Activated T-helper 2 cell treated with anti-CD3 and anti-CD28 coated beads, Interferon-gamma antibody, Interleukin-2, Interleukin-4, amounts not matched to agents 10 μg/mL and 5 μg/mL and 100 μg/mL, durations not matched to agents 14 hours and 24 hours and 36 hours (primary cell): ENCODE measurements at regions of chr10 and their contacts with region 1.

Region 1: DNA sequence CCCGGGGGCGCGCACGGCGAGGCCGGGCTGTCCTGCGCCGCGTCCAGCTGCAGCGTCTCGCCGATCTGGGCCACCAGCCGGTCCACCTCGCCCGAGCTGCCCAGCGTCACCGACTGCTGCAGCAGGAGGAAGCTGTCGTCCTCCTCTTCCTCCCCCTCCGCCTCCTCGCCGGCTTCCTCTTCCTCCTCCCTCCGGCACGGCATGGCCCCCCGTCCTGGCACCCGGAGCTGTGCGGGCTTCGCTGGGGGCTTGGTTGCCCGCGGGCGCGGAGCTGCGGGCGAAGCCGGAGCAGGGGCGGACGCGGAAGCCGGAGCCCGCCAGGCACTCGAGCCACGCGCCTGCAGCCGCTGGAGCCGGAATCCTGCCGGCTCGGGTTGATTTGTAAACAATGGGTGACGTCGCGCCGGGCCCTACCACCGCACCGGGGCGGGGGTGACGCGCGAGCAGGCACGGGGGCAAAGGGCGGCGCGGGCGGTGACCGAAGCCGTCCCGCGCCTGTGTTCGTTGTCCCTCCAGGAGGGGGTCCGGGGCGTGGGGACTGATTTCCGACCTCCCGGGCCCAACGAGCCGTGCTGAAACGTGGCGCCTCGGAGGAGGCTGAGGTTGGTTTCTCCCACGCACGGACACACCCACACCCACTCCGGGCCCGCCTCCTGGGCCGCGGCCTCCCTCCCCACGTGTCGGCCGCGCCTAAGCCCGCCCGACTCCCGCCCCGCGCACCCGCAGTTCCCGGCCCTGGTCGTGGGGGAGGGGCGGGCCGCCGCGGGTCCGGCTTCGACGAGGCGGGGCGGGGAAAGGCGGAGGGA is at the start of gene FRAT2:
- DNase-seq: peak; percentile 85
- H3K4me3 Mint-ChIP-seq: peak within 1 kb of the TSS; percentile 85
- H3K27ac Mint-ChIP-seq: peak within 1 kb of the TSS; percentile 86
- H3K4me1 Mint-ChIP-seq: peaks cover 25% of the 10 kb centered on the region
- H3K27me3 Mint-ChIP-seq: peaks cover 22% of the 10 kb centered on the region
- total RNA-seq, gene FRAT2: 10.4 and 10.6 TPM in 2 replicates

Region 2: DNA sequence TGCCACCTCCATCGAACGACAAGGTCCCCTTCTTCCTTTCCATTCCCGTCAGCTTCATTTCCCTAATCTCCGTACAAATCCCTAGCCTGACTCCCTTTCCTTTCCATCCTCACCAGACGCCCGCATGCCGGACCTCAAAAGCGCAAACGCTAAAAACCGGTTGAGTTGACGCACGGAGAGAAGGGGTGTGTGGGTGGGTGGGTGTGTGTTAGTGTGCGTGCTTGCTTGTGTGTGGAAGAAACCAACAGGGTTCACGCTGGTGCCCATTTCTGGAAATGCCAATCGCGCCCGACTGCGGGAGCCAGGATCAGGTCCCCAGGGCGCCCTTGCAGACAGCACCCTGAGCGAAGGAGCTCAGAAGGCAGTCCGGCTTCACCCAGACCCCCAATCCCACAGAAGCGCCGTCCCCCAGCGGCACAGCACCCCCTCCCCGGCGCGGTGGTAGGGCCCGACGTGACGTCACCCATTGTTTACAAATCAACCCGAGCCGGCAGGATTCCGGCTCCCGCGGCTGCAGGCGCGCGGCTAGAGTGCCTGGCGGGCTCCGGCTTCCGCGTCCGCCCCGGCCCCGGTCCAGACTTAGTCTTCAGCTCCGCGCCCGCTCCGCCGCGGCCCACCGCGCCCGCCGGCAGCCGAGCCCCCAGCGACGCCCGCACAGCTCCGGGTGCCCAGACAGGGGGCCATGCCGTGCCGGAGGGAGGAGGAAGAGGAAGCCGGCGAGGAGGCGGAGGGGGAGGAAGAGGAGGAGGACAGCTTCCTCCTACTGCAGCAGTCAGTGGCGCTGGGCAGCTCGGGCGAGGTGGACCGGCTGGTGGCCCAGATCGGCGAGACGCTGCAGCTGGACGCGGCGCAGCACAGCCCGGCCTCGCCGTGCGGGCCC is 15.6 kb before region 1 on chr10 and contains the start of gene FRAT1:
- intact Hi-C with region 1: loop called (anchors 1 kb)
- DNase-seq: peak; percentile 89
- H3K4me3 Mint-ChIP-seq: peak within 1 kb of the TSS; percentile 91
- H3K27ac Mint-ChIP-seq: peak within 1 kb of the TSS; percentile 99
- H3K4me1 Mint-ChIP-seq: peaks cover 19% of the 10 kb centered on the region
- H3K27me3 Mint-ChIP-seq: peaks cover 10% of the 10 kb centered on the region
- total RNA-seq, gene FRAT1: 2.9 and 3.4 TPM in 2 replicates